Heart right ventricle (tissue), 16 donors: ENCODE measurements at regions of chr14 and their contacts with region 1.

Region 1: GRCh38 chr14:55354500-55354899 is 57.1 kb downstream of the ATG14 start:
- DNase-seq: peak in 1 of 2 donors; percentile 53
- ATAC-seq: peak; percentile 40 to 89 (median 78)
- H3K4me3 ChIP-seq: no peak overlapping the region
- H3K27ac ChIP-seq: no peak overlapping the region
- H3K4me1 ChIP-seq: peaks cover 0 to 18% (median 0%) of the 10 kb centered on the region in 9 donors
- H3K27me3 ChIP-seq: no peaks in the 10 kb centered on the region
- CTCF ChIP-seq: peak; percentile 18 to 73 (median 59)

Region 2: DNA sequence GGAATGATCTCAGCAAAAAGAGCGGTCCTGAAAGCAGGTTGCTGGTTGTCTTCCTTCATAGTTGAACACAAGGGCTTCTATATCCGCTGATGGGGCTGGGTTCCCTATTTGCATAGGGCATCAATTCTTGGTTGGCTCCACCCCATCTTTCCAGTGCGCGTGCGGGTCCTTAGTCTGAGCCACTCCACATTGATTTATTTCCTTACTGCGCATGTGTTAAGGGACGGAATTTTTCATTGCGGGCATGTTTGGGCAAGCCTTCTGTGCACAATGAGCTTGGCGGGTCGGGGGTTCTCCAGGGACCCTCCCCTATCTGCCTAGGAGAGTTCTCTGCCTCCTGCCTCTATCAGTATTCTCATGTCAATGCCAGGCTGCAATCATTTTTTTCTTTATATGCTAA is 141.9 kb before region 1 on chr14:
- intact Hi-C with region 1: loop called in 5 of 10 experiments (anchors 2 to 10 kb)
- DNase-seq: no peak
- ATAC-seq: no peak
- H3K4me3 ChIP-seq: no peak overlapping the region
- H3K27ac ChIP-seq: no peak overlapping the region
- H3K4me1 ChIP-seq: peaks cover 0 to 6% (median 0%) of the 10 kb centered on the region in 9 donors
- H3K27me3 ChIP-seq: no peaks in the 10 kb centered on the region
- CTCF ChIP-seq: no peak

Region 3: GRCh38 chr14:55265197-55265596 is 89.3 kb before region 1 on chr14:
- intact Hi-C with region 1: loop called in 8 of 10 experiments (anchors 2 to 5 kb)
- DNase-seq: no peak
- ATAC-seq: no peak
- H3K4me3 ChIP-seq: no peak overlapping the region
- H3K27ac ChIP-seq: no peak overlapping the region
- H3K4me1 ChIP-seq: peaks cover 0 to 3% (median 0%) of the 10 kb centered on the region in 9 donors
- H3K27me3 ChIP-seq: no peaks in the 10 kb centered on the region
- CTCF ChIP-seq: no peak

Region 4: GRCh38 chr14:55270832-55271565 is 83.5 kb before region 1 on chr14 and contains the start of gene FBXO34:
- intact Hi-C with region 1: loop called (anchors 1 to 5 kb)
- DNase-seq: peak; percentile 99 to 100
- ATAC-seq: peak; percentile 90 to 97 (median 94)
- H3K4me3 ChIP-seq: peak within 1 kb of the TSS; percentile 73 to 99 (median 96)
- H3K27ac ChIP-seq: peak within 1 kb of the TSS; percentile 76 to 97 (median 96)
- H3K4me1 ChIP-seq: peaks cover 0 to 39% (median 29%) of the 10 kb centered on the region in 9 donors
- H3K27me3 ChIP-seq: no peaks in the 10 kb centered on the region
- CTCF ChIP-seq: peak; percentile 99 to 100 (median 100)
- total RNA-seq, gene FBXO34: 16.9 to 26.2 (median 21.2) TPM